PC-3 (cell line): ENCODE measurements at regions of chr2 and their contacts with region 1.

Region 1: GRCh38 chr2:218257390-218257981 is 3.3 kb upstream of the GPBAR1 start:
- DNase-seq: peak; percentile 45
- ATAC-seq: no peak
- H3K4me3 ChIP-seq: no peak overlapping the region
- H3K27ac ChIP-seq: no peak overlapping the region
- H3K4me1 ChIP-seq: no peaks in the 10 kb centered on the region
- H3K27me3 ChIP-seq: no peaks in the 10 kb centered on the region
- CTCF ChIP-seq: peak; percentile 69

Region 2: GRCh38 chr2:218236829-218237228 is 20.7 kb before region 1 on chr2:
- CTCF ChIA-PET with region 1: no interaction called
- POLR2A ChIA-PET with region 1: interaction called, 18 read pairs
- intact Hi-C with region 1: no loop called
- DNase-seq: no peak
- ATAC-seq: no peak
- H3K4me3 ChIP-seq: no peak overlapping the region
- H3K27ac ChIP-seq: no peak overlapping the region
- H3K4me1 ChIP-seq: no peaks in the 10 kb centered on the region
- H3K27me3 ChIP-seq: no peaks in the 10 kb centered on the region
- CTCF ChIP-seq: no peak

Region 3: DNA sequence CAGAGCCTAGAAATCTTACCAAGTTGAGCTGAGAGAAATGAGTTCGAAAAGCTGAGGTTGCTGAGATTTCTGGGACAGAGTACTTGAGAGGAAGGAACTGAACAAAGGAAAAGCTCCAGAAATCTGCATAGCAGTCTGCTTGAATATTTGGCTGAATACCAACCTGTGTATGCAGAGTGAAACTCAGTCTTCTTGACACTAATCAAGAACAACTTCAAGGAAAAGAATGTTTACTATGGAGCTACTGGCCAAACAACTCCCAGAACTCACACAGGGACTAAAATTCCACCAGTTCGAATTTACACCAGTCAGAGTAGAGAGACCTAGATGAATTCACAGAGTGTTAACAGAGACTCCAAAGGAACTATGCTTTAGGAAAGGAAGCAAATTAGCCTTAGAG is 244.2 kb after region 1 on chr2:
- CTCF ChIA-PET with region 1: no interaction called
- POLR2A ChIA-PET with region 1: no interaction called
- intact Hi-C with region 1: no loop called
- DNase-seq: no peak
- ATAC-seq: no peak
- H3K4me3 ChIP-seq: no peak overlapping the region
- H3K27ac ChIP-seq: no peak overlapping the region
- H3K4me1 ChIP-seq: no peaks in the 10 kb centered on the region
- H3K27me3 ChIP-seq: no peaks in the 10 kb centered on the region
- CTCF ChIP-seq: no peak